ENCODE measurements at regions of chr5 and their contacts with region 1.

Region 1: DNA sequence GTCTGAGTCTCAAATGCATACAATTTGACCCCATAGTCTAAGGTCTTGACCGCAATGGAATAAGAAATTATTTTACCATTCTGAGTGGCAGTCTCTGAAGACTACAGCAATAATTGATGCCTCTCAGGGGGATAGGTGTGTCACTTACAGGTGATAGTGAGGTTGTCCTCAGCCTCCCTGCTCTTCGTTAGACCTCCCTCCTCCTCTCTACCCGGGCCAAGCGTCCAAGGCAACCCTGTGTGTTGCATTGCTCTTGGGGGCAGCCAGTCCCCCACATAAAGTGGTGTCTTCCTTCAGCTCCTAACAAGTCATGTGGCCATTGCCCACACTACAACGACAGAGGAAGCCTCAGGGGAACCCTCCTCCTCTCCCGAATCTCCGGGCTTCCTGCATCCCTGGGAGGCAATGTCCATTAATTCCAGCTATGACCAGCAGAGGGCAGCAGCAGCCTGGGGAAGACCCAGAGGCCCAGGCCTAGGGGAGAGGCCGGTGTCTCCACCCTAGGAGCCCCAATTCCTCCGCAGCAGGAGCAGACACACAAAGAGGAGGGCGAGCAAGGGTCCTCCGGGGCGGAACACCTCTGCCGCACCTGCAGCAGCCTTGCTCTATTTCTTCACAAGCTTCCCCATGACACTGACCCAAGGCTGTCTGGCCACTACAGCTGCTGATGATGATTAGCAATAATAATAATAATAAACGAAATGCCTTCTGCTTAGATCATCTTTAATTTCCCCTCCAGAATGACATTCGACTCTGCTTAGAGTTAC is 134.8 kb downstream of the KCNIP1 start:
- DNase-seq: peak; percentile 14 to 72 (median 44)
- ATAC-seq: peak; percentile 69
- H3K4me3 ChIP-seq: no peak overlapping the region
- H3K4me3 Mint-ChIP-seq: no peak overlapping the region
- H3K27ac ChIP-seq: no peak overlapping the region
- H3K27ac Mint-ChIP-seq: peak overlapping the region in 1 of 9 donors; percentile 65
- H3K4me1 ChIP-seq: peaks cover 0 to 10% of the 10 kb centered on the region in 2 donors
- H3K4me1 Mint-ChIP-seq: peaks cover 3 to 15% (median 10%) of the 10 kb centered on the region in 7 donors
- H3K27me3 ChIP-seq: no peaks in the 10 kb centered on the region
- H3K27me3 Mint-ChIP-seq: peaks cover 6 to 27% (median 10%) of the 10 kb centered on the region in 5 donors

Region 2: DNA sequence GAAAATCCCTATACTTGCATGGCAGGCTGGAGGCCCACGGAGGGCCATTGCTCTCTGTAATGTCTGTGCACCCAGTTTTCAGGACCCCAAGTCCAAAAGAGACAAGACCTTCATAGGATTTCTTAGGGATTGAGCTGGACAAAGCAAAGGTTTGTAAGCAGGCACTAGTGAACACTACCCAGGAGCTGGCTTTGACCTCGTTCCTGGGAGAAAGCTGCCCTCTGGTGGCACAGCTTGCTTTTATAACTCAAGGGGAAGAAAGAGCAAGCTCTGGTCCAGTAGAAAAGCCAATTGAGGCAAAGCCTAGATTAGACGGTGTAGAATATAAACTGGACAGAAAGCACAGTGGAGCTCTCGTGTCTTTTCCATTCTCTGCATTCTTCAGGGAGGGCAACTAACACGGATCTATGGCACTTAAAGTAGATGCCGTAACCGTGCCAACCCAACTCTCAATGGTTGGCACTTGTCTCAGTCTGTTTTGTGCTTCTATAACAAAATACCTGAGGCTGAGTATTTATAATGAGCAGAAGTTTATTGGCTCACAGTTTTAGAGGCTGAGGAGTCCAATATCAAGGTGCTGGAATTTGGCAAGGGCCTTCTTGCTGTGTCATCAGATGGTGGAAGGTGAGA is 152.8 kb after region 1 on chr5:
- CTCF ChIA-PET with region 1: no interaction called
- POLR2A ChIA-PET with region 1: no interaction called
- intact Hi-C with region 1: loop called in 1 of 2 experiments (anchors 1 kb)
- DNase-seq: no peak
- ATAC-seq: no peak
- H3K4me3 ChIP-seq: no peak overlapping the region
- H3K4me3 Mint-ChIP-seq: no peak overlapping the region
- H3K27ac ChIP-seq: no peak overlapping the region
- H3K27ac Mint-ChIP-seq: no peak overlapping the region
- H3K4me1 ChIP-seq: no peaks in the 10 kb centered on the region
- H3K4me1 Mint-ChIP-seq: no peaks in the 10 kb centered on the region
- H3K27me3 ChIP-seq: no peaks in the 10 kb centered on the region
- H3K27me3 Mint-ChIP-seq: peaks cover 0 to 4% (median 0%) of the 10 kb centered on the region in 5 donors

Region 3: GRCh38 chr5:171336521-171337209 is 698.0 kb after region 1 on chr5:
- CTCF ChIA-PET with region 1: no interaction called
- POLR2A ChIA-PET with region 1: no interaction called
- intact Hi-C with region 1: loop called in 1 of 2 experiments (anchors 5 kb)
- DNase-seq: no peak
- ATAC-seq: peak; percentile 38
- H3K4me3 ChIP-seq: no peak overlapping the region
- H3K4me3 Mint-ChIP-seq: peak overlapping the region; percentile 45 to 74 (median 61)
- H3K27ac ChIP-seq: no peak overlapping the region
- H3K27ac Mint-ChIP-seq: no peak overlapping the region
- H3K4me1 ChIP-seq: no peaks in the 10 kb centered on the region
- H3K4me1 Mint-ChIP-seq: peaks cover 0 to 10% (median 4%) of the 10 kb centered on the region in 7 donors
- H3K27me3 ChIP-seq: no peaks in the 10 kb centered on the region
- H3K27me3 Mint-ChIP-seq: peaks cover 38 to 62% (median 46%) of the 10 kb centered on the region in 5 donors